Mammary epithelial cell (primary cell): ENCODE measurements at regions of chrX and their contacts with region 1.

Region 1: GRCh38 chrX:78555401-78555980 is 103.6 kb downstream of the RTL3 start:
- DNase-seq: no peak
- H3K4me3 ChIP-seq: no peak overlapping the region
- H3K27ac ChIP-seq: no peak overlapping the region
- H3K4me1 ChIP-seq: no peaks in the 10 kb centered on the region
- H3K27me3 ChIP-seq: no peaks in the 10 kb centered on the region
- CTCF ChIP-seq: peak; percentile 40 to 47

Region 2: DNA sequence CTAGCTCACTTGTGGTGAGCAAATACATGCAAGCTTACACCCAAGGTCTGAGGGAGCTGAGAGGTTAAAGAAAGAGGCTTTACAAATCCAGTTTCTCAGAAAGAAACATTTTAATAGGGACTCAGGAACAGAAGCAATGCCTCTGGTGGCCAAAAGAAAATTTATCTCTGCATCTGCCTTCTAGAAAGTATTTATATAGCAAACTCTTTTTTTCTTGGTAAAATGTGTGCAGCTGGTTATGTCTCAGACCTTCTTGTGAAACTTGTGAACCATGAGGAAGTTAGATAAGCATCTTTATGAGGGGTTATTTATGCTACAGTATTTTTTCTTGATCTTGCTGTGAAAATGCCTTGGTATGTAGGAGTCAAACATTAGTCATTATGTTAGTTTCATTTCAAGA is 179.6 kb before region 1 on chrX:
- CTCF ChIA-PET with region 1: no interaction called
- dilution Hi-C with region 1: no loop called
- in situ Hi-C with region 1: no loop called
- intact Hi-C with region 1: no loop called
- DNase-seq: peak; percentile 63
- H3K4me3 ChIP-seq: no peak overlapping the region
- H3K27ac ChIP-seq: no peak overlapping the region
- H3K4me1 ChIP-seq: no peaks in the 10 kb centered on the region
- H3K27me3 ChIP-seq: peaks cover 2% of the 10 kb centered on the region
- CTCF ChIP-seq: no peak

Region 3: GRCh38 chrX:78886550-78886949 is 331.1 kb after region 1 on chrX:
- CTCF ChIA-PET with region 1: no interaction called
- dilution Hi-C with region 1: no loop called
- in situ Hi-C with region 1: no loop called
- intact Hi-C with region 1: loop called (anchors 1 kb)
- DNase-seq: no peak
- H3K4me3 ChIP-seq: no peak overlapping the region
- H3K27ac ChIP-seq: no peak overlapping the region
- H3K4me1 ChIP-seq: no peaks in the 10 kb centered on the region
- H3K27me3 ChIP-seq: no peaks in the 10 kb centered on the region
- CTCF ChIP-seq: peak; percentile 31 to 46

Region 4: DNA sequence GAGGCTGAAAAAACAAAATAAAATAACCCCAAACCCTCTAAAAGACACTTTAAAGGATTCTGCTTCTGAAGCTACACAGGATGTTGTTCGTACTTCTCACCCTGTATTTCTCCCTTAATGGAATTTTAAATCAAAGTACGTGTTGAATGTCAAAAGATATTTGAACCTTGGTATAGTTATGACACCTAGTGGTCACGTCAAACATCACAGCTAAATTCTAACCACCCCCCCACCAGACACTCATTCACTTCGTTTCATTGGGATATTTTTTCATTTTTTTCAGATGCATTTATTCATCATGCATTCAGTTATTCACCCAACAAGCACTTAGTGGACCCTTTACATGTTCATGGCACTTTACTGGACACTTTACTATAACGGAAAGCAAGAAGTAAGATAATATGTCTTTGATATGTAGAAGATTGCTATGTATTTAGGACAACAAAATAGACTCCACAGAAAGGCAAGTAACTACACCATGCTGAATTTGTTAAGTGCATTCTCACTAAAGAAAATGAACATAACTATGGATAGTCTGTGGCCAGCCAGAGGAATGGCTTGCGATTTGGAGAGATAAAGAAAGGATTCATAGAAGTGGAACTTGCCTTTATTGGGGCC is 526.5 kb after region 1 on chrX:
- CTCF ChIA-PET with region 1: no interaction called
- dilution Hi-C with region 1: no loop called
- in situ Hi-C with region 1: loop called in 1 of 2 experiments (anchors 25 kb)
- intact Hi-C with region 1: loop called (anchors 1 kb)
- DNase-seq: peak; percentile 30
- H3K4me3 ChIP-seq: no peak overlapping the region
- H3K27ac ChIP-seq: no peak overlapping the region
- H3K4me1 ChIP-seq: no peaks in the 10 kb centered on the region
- H3K27me3 ChIP-seq: no peaks in the 10 kb centered on the region
- CTCF ChIP-seq: peak; percentile 57 to 60

Region 5: DNA sequence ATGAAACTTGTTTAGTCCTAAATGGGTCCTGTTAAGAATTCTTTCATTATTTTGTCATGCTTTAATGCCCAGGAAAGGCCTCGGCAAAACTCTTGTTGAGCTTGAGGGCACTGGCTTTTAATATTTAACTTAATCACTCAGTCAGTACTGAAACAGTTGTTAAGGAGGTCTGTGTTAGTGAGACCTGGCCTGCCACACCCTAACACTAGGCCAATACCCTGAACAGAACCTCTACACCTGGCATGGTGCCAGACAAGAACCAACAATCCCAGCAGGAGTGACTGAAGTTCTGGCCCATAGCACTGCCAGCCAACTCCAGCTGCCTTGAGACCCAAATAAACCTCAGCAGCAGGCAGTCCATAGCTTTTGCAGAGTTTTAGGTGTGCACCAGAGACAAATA is 897.4 kb after region 1 on chrX:
- CTCF ChIA-PET with region 1: no interaction called
- dilution Hi-C with region 1: no loop called
- in situ Hi-C with region 1: no loop called
- intact Hi-C with region 1: loop called (anchors 10 kb)
- DNase-seq: no peak
- H3K4me3 ChIP-seq: no peak overlapping the region
- H3K27ac ChIP-seq: no peak overlapping the region
- H3K4me1 ChIP-seq: no peaks in the 10 kb centered on the region
- H3K27me3 ChIP-seq: no peaks in the 10 kb centered on the region
- CTCF ChIP-seq: no peak